ENCODE measurements at regions of chr3 and their contacts with region 1.

Region 1: GRCh38 chr3:187745201-187746058 is at the start of gene BCL6:
- DNase-seq: peak; percentile 97
- total RNA-seq, gene BCL6: 87.7 to 143 TPM

Region 2: GRCh38 chr3:187714404-187714979 is 30.9 kb before region 1 on chr3:
- intact Hi-C with region 1: no loop called
- DNase-seq: no peak

Region 3: GRCh38 chr3:187767266-187768012 is 22.0 kb after region 1 on chr3:
- intact Hi-C with region 1: no loop called
- DNase-seq: no peak

Region 4: DNA sequence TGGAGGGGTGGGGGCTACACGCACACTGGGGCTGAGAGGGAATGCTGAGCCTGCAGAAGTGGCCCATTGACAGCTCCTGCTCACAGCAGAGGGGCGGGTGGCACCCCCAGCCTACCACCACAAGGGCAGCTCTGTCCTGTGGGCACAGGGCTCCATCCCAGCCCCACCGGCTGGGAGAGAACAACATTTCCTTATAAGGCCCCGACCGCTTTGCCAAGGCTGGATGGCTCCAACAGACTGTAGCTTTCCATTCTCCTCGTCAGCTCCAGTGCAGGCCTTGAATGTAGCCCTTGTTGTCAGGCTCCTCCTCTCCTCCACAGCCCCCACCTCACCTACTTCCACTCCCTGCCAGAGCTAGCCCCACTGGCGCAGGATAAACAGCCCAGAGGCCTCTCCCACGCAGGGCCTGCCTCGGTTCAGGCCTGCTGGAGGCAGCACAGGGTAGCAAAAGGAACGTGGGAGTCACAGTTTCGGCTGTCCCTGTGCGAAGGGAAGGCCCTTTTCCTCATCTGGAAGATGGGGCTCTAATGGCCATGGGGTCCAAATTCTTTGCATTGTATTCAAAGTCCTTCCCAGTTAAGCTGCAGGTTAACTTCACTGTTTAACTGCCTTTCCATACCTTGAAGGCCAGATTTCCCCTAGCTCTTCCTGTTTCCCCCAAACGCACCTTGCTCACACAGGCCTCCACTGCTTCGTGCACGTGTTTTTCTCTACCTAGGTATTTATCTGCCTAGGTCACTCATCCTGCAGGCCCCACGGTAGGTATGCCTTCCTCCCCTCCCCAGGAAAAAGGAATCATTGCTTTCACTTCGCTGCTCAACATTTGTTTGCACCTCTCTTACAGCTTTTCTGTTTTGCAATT is 307.0 kb after region 1 on chr3:
- intact Hi-C with region 1: loop called (anchors 5 to 10 kb)
- DNase-seq: peak; percentile 95

Region 5: GRCh38 chr3:188154014-188154808 is 408.8 kb after region 1 on chr3 and contains the start of gene LPP:
- intact Hi-C with region 1: loop called in 1 of 2 experiments (anchors 10 kb)
- DNase-seq: no peak
- total RNA-seq, gene LPP: 1,601 to 1,705 TPM

Region 6: DNA sequence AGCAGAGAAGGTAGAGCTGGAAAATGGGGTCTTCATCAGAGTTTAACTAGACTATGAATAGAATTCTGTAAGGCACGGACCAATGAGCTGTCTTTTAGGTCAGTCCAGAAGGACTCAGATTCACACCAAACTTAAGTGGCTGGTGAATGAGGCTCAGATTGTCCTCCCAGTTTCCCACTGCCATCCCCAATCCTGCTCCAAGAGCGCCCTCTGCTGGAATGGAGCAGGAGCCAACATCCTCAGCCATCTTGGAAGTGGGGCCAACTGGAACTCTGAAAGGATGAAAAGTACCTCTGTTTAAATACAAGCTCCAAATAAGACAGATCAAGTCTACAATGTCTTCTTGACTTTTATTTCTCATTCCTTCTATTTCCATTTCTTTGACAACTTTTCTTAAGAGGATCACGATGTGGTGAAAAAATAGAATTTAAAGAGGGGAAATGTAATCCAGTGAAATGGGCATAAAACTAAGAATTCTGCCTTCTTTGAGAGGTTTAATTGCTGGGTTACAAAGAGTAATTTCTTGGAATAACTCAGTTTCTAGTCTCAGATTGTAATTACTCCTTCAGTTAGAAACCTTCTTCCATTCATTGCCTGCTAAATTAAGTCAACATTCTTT is 1209.3 kb after region 1 on chr3:
- intact Hi-C with region 1: loop called in 1 of 2 experiments (anchors 10 kb)
- DNase-seq: peak; percentile 95

Region 7: DNA sequence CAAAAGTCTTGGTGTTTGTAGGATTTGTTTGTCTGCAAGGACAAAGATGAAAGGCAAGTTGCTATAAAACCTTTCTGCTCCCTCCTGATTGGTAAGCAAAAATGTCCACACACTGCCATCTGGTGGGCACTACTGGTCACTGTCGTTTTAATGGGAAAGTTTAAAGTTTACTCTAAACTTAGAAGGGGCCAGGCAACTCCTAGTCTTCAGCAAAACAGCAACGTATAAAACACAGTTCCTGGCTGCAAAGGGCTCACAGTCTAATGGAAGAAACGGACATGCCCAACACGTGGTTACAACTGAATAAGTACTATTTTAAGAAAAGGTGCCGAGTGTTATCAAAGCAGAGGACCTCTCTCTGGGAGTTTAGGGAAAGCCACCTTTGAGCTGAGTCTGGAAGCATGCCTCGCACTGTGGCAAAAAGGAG is 1402.7 kb after region 1 on chr3:
- intact Hi-C with region 1: loop called in 1 of 2 experiments (anchors 10 kb)
- DNase-seq: no peak